AG04449 (cell line): ENCODE measurements at regions of chr17 and their contacts with region 1.

Region 1: DNA sequence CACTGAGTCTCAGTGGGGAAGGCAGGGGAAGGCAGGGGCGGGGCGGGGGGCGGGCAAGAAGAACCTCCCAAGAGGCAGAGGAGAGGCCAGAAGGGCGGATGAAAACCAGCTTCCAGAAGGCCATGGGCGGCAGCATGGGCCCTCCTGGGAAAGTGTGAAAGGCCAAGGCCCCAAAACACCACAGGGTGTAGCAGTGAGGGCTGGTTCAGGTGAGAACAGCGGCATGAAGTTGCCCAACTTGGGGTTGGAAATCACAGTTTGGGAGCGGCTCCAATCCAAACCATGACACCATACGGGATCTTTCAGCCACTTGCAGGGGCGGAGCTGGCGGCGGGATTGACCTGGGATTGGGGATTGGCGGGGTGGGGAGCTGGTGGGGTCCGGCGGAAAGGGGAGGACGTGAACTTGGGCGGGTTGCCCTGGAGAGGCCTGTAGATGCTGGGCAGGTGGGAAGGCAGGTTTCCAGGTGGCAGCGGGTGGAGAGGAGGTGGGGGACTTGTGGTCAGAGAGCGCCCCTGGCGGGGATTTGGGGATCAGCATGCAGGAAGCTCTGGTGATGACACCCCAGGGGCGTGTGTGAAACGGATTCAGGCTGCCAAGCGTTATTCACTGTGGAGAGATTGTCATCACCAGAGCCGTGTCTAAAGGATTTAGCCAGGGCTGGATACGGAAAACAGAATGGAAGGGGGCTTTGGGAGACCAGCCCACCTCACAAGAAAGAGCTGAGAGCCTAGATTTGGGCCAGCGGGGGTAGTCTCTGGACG is 80.9 kb downstream of the ARHGAP23 start:
- DNase-seq: peak; percentile 66
- H3K4me3 ChIP-seq: no peak overlapping the region
- CTCF ChIP-seq: peak; percentile 89

Region 2: DNA sequence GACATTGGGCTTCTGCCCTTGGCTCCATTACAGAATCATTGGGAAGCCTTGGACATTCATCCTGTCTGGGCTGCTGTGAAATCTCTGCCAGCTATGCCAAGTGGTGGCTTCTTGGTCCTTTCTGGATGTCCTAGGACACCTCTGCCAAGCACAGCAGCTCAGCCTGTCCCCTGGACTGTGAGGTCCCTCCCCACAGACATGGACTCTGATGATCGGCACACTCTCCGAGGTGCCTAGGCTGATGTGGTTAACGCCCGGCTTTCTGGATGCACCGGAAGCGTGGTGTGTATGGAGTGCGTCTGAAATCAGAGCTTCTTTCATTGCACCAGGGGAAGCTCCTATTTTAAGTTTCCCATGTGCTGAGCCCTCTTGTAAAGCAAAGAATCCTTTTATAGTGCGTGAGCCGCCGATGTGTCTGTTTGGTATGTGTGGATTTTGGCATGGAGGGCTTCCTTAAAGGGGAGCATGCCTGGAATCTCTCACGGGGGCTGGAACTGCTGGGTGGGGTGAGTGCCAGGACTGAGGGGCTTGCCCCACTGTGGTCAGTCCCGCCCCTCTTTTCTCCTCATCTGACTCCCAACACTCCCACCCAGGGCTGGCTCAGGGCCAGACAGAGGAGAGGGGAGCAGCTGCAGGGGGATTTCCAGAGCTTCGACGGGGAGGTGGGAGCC is 87.9 kb before region 1 on chr17:
- CTCF ChIA-PET with region 1: interaction called, 15 read pairs
- POLR2A ChIA-PET with region 1: interaction called, 3 read pairs
- DNase-seq: peak; percentile 78
- H3K4me3 ChIP-seq: peak overlapping the region; percentile 20
- CTCF ChIP-seq: no peak

Region 3: GRCh38 chr17:38428112-38428642 is 81.0 kb before region 1 on chr17 and contains the start of gene ARHGAP23:
- CTCF ChIA-PET with region 1: interaction called, 13 read pairs
- POLR2A ChIA-PET with region 1: interaction called, 3 read pairs
- DNase-seq: no peak
- H3K4me3 ChIP-seq: peak within 1 kb of the TSS; percentile 74
- CTCF ChIP-seq: no peak

Region 4: GRCh38 chr17:38454516-38454915 is 54.7 kb before region 1 on chr17:
- CTCF ChIA-PET with region 1: interaction called, 14 read pairs
- POLR2A ChIA-PET with region 1: interaction called, 3 read pairs
- DNase-seq: no peak
- H3K4me3 ChIP-seq: peak overlapping the region; percentile 77
- CTCF ChIP-seq: no peak

Region 5: GRCh38 chr17:38498186-38498752 is 10.9 kb before region 1 on chr17:
- CTCF ChIA-PET with region 1: interaction called, 11 read pairs
- POLR2A ChIA-PET with region 1: no interaction called
- DNase-seq: no peak
- H3K4me3 ChIP-seq: no peak overlapping the region
- CTCF ChIP-seq: no peak

Region 6: DNA sequence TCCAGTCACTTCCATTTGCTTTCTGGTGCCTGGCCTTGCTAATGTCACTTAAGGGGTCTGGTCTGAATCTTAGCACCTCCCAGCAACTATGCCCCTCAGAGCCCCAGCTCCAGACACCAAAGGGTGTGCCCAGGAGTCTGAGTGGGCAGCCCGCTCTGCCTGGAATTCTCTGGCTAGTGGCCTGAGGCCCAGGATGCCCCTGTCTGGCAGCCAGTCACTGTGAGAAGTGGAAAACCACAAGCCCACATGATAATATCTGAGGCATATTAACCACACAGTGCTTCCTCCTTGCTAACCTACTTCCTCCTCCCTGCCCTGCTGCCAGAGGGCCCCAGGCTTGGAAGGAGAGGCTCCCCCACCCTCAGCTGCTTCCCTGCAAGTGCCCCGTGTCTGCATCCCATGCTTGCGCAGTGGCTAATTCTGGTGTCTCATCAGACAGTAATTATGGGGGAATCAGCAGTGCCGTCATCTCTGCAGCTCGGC is 82.6 kb after region 1 on chr17:
- CTCF ChIA-PET with region 1: no interaction called
- POLR2A ChIA-PET with region 1: no interaction called
- DNase-seq: no peak
- H3K4me3 ChIP-seq: no peak overlapping the region
- CTCF ChIP-seq: no peak

Region 7: GRCh38 chr17:38667099-38667786 is 158.1 kb after region 1 on chr17:
- CTCF ChIA-PET with region 1: interaction called, 210 read pairs
- POLR2A ChIA-PET with region 1: interaction called, 4 read pairs
- DNase-seq: no peak
- H3K4me3 ChIP-seq: no peak overlapping the region
- CTCF ChIP-seq: peak; percentile 98